CD8-positive, alpha-beta T cell (primary cell): ENCODE measurements at regions of chr11 and their contacts with region 1.

Region 1: GRCh38 chr11:117178210-117179034 is at the start of gene SIDT2:
- DNase-seq: peak; percentile 78 to 94 (median 90)
- ATAC-seq: peak; percentile 92
- H3K4me3 ChIP-seq: peak within 1 kb of the TSS; percentile 57 to 76
- H3K4me3 Mint-ChIP-seq: peak within 1 kb of the TSS; percentile 96
- H3K27ac ChIP-seq: peak within 1 kb of the TSS; percentile 50 to 80
- H3K27ac Mint-ChIP-seq: peak within 1 kb of the TSS; percentile 97
- H3K4me1 ChIP-seq: peaks cover 24% of the 10 kb centered on the region
- H3K4me1 Mint-ChIP-seq: peaks cover 29% of the 10 kb centered on the region
- H3K27me3 ChIP-seq: no peaks in the 10 kb centered on the region
- H3K27me3 Mint-ChIP-seq: no peaks in the 10 kb centered on the region
- CTCF ChIP-seq: no peak
- total RNA-seq, gene SIDT2: 133 to 134 TPM

Region 2: DNA sequence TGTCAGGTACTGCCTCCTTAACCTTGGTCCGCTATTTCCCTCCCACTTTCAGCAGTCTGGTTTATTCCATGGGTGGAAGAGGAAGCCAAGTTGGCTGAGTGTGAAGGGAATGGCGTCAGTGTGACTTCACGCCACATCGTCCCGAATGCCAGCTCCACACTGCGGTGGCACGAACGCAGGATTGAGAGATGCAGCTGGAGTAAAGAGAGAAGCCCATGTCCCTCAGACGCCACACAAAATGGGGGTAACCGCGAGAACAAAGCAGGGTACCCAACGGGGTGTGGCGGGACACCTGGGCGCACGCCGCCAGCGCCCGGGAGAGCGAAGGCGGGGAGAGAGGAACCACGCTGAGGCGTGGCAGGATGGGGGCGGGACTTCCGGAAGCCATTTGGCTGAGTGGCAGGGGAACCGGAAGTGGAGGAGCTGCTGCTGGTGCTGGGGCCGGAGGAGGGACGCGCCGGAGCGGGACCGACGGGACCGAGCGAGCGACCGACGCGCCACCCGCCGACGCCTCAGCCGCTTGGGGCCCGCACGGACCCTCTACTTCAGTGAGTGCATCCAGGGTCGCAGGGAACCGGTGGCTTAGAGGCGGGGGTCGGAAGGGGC is 34.4 kb before region 1 on chr11 and contains the start of gene PAFAH1B2:
- CTCF ChIA-PET with region 1: interaction called, 3 read pairs
- POLR2A ChIA-PET with region 1: interaction called, 32 read pairs
- intact Hi-C with region 1: loop called (anchors 1 kb)
- DNase-seq: peak; percentile 87 to 97 (median 95)
- ATAC-seq: peak; percentile 82
- H3K4me3 ChIP-seq: peak within 1 kb of the TSS; percentile 74 to 78
- H3K4me3 Mint-ChIP-seq: peak within 1 kb of the TSS; percentile 95
- H3K27ac ChIP-seq: peak within 1 kb of the TSS; percentile 69 to 75
- H3K27ac Mint-ChIP-seq: peak within 1 kb of the TSS; percentile 95
- H3K4me1 ChIP-seq: peaks cover 16% of the 10 kb centered on the region
- H3K4me1 Mint-ChIP-seq: peaks cover 44% of the 10 kb centered on the region
- H3K27me3 ChIP-seq: peaks cover 0 to 3% of the 10 kb centered on the region in 2 experiments
- H3K27me3 Mint-ChIP-seq: peaks cover 5% of the 10 kb centered on the region
- CTCF ChIP-seq: no peak
- total RNA-seq, gene PAFAH1B2: 52.1 to 55.9 TPM